Activated CD8-positive, alpha-beta T cell treated with anti-CD3 and anti-CD28 coated beads for 36 hours (primary cell): ENCODE measurements at regions of chrX and their contacts with region 1.

Region 1: GRCh38 chrX:70454441-70455365 is 10.1 kb downstream of the DLG3 start:
- DNase-seq: peak; percentile 84
- ATAC-seq: peak; percentile 71
- H3K4me3 Mint-ChIP-seq: peak overlapping the region; percentile 82
- H3K27ac Mint-ChIP-seq: peak overlapping the region; percentile 86
- H3K4me1 Mint-ChIP-seq: peaks cover 39% of the 10 kb centered on the region
- H3K27me3 Mint-ChIP-seq: no peaks in the 10 kb centered on the region
- CTCF ChIP-seq: peak; percentile 53

Region 2: GRCh38 chrX:70398899-70399298 is 55.8 kb before region 1 on chrX:
- CTCF ChIA-PET with region 1: no interaction called
- POLR2A ChIA-PET with region 1: no interaction called
- intact Hi-C with region 1: no loop called
- DNase-seq: no peak
- ATAC-seq: peak; percentile 51
- H3K4me3 Mint-ChIP-seq: no peak overlapping the region
- H3K27ac Mint-ChIP-seq: peak overlapping the region; percentile 72
- H3K4me1 Mint-ChIP-seq: peaks cover 4% of the 10 kb centered on the region
- H3K27me3 Mint-ChIP-seq: no peaks in the 10 kb centered on the region
- CTCF ChIP-seq: no peak

Region 3: GRCh38 chrX:70433848-70434351 is 20.8 kb before region 1 on chrX:
- CTCF ChIA-PET with region 1: interaction called, 11 read pairs
- POLR2A ChIA-PET with region 1: interaction called, 4 read pairs
- intact Hi-C with region 1: no loop called
- DNase-seq: peak; percentile 83
- ATAC-seq: peak; percentile 79
- H3K4me3 Mint-ChIP-seq: peak overlapping the region; percentile 86
- H3K27ac Mint-ChIP-seq: peak overlapping the region; percentile 91
- H3K4me1 Mint-ChIP-seq: peaks cover 18% of the 10 kb centered on the region
- H3K27me3 Mint-ChIP-seq: no peaks in the 10 kb centered on the region
- CTCF ChIP-seq: peak; percentile 60

Region 4: GRCh38 chrX:70554948-70555347 is 100.2 kb after region 1 on chrX:
- CTCF ChIA-PET with region 1: no interaction called
- POLR2A ChIA-PET with region 1: interaction called, 3 read pairs
- intact Hi-C with region 1: loop called (anchors 5 kb)
- DNase-seq: no peak
- ATAC-seq: no peak
- H3K4me3 Mint-ChIP-seq: no peak overlapping the region
- H3K27ac Mint-ChIP-seq: no peak overlapping the region
- H3K4me1 Mint-ChIP-seq: peaks cover 13% of the 10 kb centered on the region
- H3K27me3 Mint-ChIP-seq: peaks cover 5% of the 10 kb centered on the region
- CTCF ChIP-seq: no peak

Region 5: DNA sequence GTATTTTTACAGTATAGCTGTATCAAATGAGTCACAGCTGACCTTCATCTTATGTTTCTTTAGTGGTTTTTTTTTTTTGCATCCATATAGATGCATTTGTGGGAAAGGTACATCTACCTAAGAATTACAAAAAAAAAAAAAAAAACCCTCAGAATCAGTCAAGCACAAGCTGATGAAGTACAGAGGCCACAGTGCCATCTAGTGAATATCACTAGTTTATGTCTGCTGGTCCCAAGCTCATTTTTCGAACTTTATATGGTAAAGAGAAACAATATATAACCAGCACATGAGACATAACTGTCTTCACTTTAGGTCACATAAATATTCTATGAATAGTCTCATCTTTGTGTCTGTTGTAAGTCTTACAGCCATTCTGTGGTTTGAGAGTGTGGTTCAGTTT is 210.0 kb after region 1 on chrX:
- CTCF ChIA-PET with region 1: interaction called, 14 read pairs
- POLR2A ChIA-PET with region 1: no interaction called
- intact Hi-C with region 1: loop called (anchors 5 kb)
- DNase-seq: peak; percentile 12
- ATAC-seq: peak; percentile 66
- H3K4me3 Mint-ChIP-seq: no peak overlapping the region
- H3K27ac Mint-ChIP-seq: no peak overlapping the region
- H3K4me1 Mint-ChIP-seq: no peaks in the 10 kb centered on the region
- H3K27me3 Mint-ChIP-seq: no peaks in the 10 kb centered on the region
- CTCF ChIP-seq: no peak